A673 (cell line): ENCODE measurements at regions of chr1 and their contacts with region 1.

Region 1: GRCh38 chr1:111662586-111662985 is 43.0 kb downstream of the RAP1A start:
- DNase-seq: no peak
- H3K4me3 ChIP-seq: no peak overlapping the region
- H3K27ac ChIP-seq: no peak overlapping the region
- H3K4me1 ChIP-seq: no peaks in the 10 kb centered on the region
- H3K27me3 ChIP-seq: no peaks in the 10 kb centered on the region
- CTCF ChIP-seq: no peak

Region 2: GRCh38 chr1:111690306-111690617 is 27.7 kb after region 1 on chr1:
- CTCF ChIA-PET with region 1: interaction called, 11 read pairs
- POLR2A ChIA-PET with region 1: no interaction called
- intact Hi-C with region 1: no loop called
- DNase-seq: peak; percentile 92
- H3K4me3 ChIP-seq: no peak overlapping the region
- H3K27ac ChIP-seq: peak overlapping the region; percentile 0
- H3K4me1 ChIP-seq: peaks cover 9% of the 10 kb centered on the region
- H3K27me3 ChIP-seq: no peaks in the 10 kb centered on the region
- CTCF ChIP-seq: no peak